Calu3 (cell line): ENCODE measurements at regions of chr6 and their contacts with region 1.

Region 1: DNA sequence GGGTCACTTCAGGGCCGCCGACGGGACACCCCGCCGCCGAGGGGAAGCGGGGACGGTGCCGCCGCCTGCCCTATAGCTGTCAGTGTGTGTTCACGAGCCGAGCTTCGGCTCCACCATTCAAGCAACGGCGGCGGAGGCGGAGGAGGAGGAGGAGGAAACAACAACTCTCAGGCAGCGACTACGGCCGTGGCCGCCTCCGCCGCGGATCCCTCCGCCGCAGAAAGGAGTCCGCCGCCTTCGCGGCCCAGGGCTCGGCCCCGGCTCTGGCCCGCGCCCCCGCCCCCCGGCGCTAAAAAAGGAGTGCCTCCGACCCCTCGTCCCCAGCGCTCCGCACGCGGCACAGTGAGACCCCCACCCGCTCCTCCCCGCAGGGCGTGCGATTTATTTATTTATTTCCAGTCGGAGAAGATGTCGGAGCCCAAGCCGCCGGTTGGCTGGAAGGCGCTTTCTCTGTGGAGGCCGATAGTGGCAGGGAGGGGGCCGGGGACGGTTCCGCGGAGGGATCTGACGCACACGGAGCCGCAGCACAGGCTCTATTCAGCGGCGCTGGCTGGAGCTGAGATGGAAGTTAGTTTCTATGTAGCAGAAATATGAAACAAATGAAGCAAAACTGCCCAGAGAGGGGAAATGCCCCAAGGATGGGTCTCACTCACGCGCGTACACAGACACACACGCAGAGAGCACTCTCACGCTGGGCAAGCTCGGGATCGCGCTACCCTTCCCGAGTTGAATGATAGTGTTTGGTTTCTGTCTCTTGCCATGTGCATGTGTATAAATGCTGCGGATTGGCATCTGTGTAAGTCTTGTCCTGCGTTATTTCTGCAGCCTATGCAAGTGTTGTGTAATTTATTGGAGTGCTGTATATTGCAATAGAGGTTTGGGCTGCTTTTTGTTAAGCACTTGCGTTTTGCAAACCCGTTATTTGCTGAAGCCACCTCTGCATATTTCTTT is at the start of gene PHIP:
- DNase-seq: peak; percentile 92
- H3K4me3 Mint-ChIP-seq: peak within 1 kb of the TSS; percentile 92
- H3K27ac Mint-ChIP-seq: peak within 1 kb of the TSS; percentile 92
- H3K4me1 Mint-ChIP-seq: no peaks in the 10 kb centered on the region
- H3K27me3 Mint-ChIP-seq: no peaks in the 10 kb centered on the region
- CTCF ChIP-seq: no peak
- total RNA-seq, gene PHIP: 43.3 and 50.8 TPM in 2 replicates

Region 2: DNA sequence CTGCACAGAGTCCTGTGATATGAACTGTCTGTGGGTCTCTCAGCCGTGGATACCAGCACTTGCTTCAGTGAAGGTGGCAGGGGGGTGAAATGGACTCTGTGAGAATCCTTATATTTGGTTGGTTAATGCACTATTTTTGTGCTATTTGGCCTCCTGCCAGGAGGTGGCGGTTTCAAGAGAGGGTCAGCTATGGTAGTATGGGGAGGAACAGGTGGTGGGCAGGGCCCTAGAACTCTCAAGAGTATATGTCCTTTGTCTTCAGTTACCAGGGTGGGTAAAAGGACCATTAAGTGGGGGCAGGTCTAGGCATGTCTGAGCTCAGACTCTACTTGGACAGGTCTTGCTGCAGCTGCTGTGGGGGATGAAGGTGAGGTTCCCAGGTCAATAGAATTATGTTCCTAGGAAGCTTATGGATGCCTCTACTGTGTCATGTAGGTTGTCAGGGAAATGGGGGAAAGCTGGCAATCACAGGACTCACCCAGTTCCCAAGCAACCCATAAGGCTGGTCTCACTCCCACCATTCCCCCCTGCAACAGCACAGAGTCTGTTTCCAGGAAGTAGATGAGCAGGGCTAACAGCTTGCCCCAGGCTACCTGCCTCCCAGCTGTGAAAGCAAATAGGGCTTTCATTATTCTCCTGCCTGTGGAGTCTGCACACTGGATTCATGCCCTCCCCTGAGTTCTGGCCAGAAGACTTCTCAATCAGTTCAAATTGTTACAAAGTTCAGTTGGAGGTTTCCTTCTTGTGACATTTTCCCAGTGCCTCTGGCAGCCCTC is 56.5 kb after region 1 on chr6:
- CTCF ChIA-PET with region 1: no interaction called
- intact Hi-C with region 1: no loop called
- DNase-seq: no peak
- H3K4me3 Mint-ChIP-seq: no peak overlapping the region
- H3K27ac Mint-ChIP-seq: no peak overlapping the region
- H3K4me1 Mint-ChIP-seq: no peaks in the 10 kb centered on the region
- H3K27me3 Mint-ChIP-seq: no peaks in the 10 kb centered on the region
- CTCF ChIP-seq: no peak

Region 3: DNA sequence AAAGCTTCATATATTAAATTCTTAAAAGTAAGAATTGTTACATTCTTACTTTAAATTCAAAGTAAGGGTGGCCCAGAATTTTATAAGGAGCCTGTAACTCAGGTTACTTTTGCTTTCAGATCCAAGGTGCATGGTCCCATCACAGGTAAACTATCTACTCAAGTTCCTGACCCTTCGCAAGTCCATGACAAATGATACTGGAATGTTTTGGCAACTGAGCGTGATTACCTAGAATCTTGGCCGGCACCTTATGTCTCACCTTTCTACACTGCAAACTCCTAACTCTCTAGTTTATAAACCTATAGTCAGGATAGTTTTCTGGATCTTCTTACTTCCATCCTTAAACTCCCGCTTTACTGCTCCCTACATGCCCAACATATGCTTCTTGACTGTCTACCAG is 224.0 kb after region 1 on chr6:
- CTCF ChIA-PET with region 1: no interaction called
- intact Hi-C with region 1: loop called (anchors 2 kb)
- DNase-seq: peak; percentile 44
- H3K4me3 Mint-ChIP-seq: no peak overlapping the region
- H3K27ac Mint-ChIP-seq: peak overlapping the region; percentile 72
- H3K4me1 Mint-ChIP-seq: peaks cover 60% of the 10 kb centered on the region
- H3K27me3 Mint-ChIP-seq: no peaks in the 10 kb centered on the region
- CTCF ChIP-seq: no peak